CD8-positive, alpha-beta T cell (primary cell): ENCODE measurements at regions of chr10 and their contacts with region 1.

Region 1: GRCh38 chr10:103888113-103888841 is 29.7 kb downstream of the STN1 start:
- DNase-seq: peak in 3 of 9 experiments; percentile 15 to 75 (median 61)
- ATAC-seq: peak; percentile 92
- H3K4me3 ChIP-seq: no peak overlapping the region
- H3K4me3 Mint-ChIP-seq: no peak overlapping the region
- H3K27ac ChIP-seq: no peak overlapping the region
- H3K27ac Mint-ChIP-seq: peak overlapping the region; percentile 65
- H3K4me1 ChIP-seq: peaks cover 12% of the 10 kb centered on the region
- H3K4me1 Mint-ChIP-seq: peaks cover 23% of the 10 kb centered on the region
- H3K27me3 ChIP-seq: no peaks in the 10 kb centered on the region
- H3K27me3 Mint-ChIP-seq: no peaks in the 10 kb centered on the region
- CTCF ChIP-seq: peak; percentile 83

Region 2: DNA sequence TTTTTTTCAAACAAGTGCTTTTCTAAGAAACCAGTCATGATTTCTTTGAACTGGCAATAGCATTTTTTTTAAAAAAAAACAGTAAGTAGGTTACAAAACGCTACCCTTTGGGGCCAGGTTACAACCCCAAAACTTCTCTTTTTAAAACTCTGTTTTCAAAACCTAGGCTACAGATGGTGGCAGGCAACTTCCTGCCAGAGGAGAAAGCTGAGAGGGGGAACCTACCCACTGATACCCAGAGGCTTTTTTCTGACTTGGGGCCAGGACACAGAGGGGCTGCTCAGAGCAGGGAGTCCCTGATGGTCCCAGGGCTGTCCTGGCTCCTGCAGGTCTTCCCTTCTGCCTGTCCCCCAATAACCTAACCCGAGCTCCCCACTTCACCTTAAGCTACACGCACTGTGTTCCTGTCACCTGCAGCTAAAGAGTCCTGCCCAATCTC is 22.8 kb after region 1 on chr10:
- CTCF ChIA-PET with region 1: interaction called, 7 read pairs
- POLR2A ChIA-PET with region 1: interaction called, 4 read pairs
- intact Hi-C with region 1: loop called in 1 of 2 experiments (anchors 2 kb)
- DNase-seq: peak; percentile 7 to 83 (median 53)
- ATAC-seq: peak; percentile 72
- H3K4me3 ChIP-seq: peak overlapping the region; percentile 24 to 39
- H3K4me3 Mint-ChIP-seq: peak overlapping the region; percentile 80
- H3K27ac ChIP-seq: peak overlapping the region; percentile 77 to 88
- H3K27ac Mint-ChIP-seq: peak overlapping the region; percentile 91
- H3K4me1 ChIP-seq: peaks cover 88% of the 10 kb centered on the region
- H3K4me1 Mint-ChIP-seq: peaks cover 82% of the 10 kb centered on the region
- H3K27me3 ChIP-seq: no peaks in the 10 kb centered on the region
- H3K27me3 Mint-ChIP-seq: no peaks in the 10 kb centered on the region
- CTCF ChIP-seq: no peak

Region 3: DNA sequence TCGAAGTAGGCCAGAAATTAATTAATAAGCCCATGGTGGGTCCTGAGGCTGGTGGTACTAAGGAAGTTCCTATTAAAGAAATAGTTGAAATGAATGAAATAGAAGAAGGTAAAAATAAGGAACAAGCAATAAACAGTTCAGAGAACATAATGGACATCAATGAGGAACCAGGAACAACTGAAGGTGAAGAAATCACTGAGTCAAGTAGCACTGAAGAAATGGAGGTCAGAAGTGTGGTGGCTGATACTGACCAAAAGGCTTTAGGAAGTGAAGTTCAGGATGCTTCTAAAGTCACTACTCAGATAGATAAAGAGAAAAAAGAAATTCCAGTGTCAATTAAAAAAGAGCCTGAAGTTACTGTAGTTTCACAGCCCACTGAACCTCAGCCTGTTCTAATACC is 114.6 kb after region 1 on chr10:
- CTCF ChIA-PET with region 1: interaction called, 10 read pairs
- POLR2A ChIA-PET with region 1: no interaction called
- intact Hi-C with region 1: no loop called
- DNase-seq: no peak
- ATAC-seq: no peak
- H3K4me3 ChIP-seq: no peak overlapping the region
- H3K4me3 Mint-ChIP-seq: no peak overlapping the region
- H3K27ac ChIP-seq: no peak overlapping the region
- H3K27ac Mint-ChIP-seq: no peak overlapping the region
- H3K4me1 ChIP-seq: no peaks in the 10 kb centered on the region
- H3K4me1 Mint-ChIP-seq: peaks cover 6% of the 10 kb centered on the region
- H3K27me3 ChIP-seq: no peaks in the 10 kb centered on the region
- H3K27me3 Mint-ChIP-seq: no peaks in the 10 kb centered on the region
- CTCF ChIP-seq: no peak

Region 4: GRCh38 chr10:104080762-104081161 is 192.5 kb after region 1 on chr10:
- CTCF ChIA-PET with region 1: interaction called, 19 read pairs
- POLR2A ChIA-PET with region 1: no interaction called
- intact Hi-C with region 1: loop called (anchors 1 kb)
- DNase-seq: peak in 2 of 9 experiments; percentile 53 to 59
- ATAC-seq: no peak
- H3K4me3 ChIP-seq: no peak overlapping the region
- H3K4me3 Mint-ChIP-seq: no peak overlapping the region
- H3K27ac ChIP-seq: no peak overlapping the region
- H3K27ac Mint-ChIP-seq: no peak overlapping the region
- H3K4me1 ChIP-seq: no peaks in the 10 kb centered on the region
- H3K4me1 Mint-ChIP-seq: no peaks in the 10 kb centered on the region
- H3K27me3 ChIP-seq: no peaks in the 10 kb centered on the region
- H3K27me3 Mint-ChIP-seq: no peaks in the 10 kb centered on the region
- CTCF ChIP-seq: no peak

Region 5: DNA sequence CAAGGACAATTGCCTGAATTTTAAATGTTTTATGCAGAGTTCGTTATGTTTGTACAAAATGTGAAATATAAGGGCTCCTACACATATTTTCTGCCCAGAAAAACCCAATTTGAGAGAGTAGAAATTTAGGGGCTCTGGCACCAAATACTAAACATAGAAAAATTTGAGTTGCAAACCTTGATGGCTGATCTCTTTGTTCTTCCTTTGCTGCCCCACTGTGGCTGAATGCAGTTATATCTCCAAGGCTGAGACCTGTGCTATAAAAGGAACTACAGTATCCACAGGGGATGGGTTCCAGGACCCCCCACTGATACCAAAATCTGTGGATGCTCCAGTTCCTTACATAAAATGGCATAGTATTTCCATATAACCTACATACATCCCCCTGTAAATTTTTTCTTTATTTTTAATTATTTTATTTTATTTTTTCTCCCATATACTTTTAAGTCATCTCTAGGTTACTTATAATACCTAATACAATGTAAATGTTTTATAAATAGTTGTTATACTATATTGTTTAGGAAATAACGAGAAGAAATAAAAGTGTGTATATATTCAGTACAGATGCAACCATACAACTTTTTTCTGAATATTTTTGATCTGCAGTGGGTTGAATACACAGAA is 321.4 kb after region 1 on chr10:
- CTCF ChIA-PET with region 1: interaction called, 11 read pairs
- POLR2A ChIA-PET with region 1: no interaction called
- intact Hi-C with region 1: loop called (anchors 1 kb)
- DNase-seq: peak in 7 of 9 experiments; percentile 10 to 65 (median 45)
- ATAC-seq: peak; percentile 71
- H3K4me3 ChIP-seq: no peak overlapping the region
- H3K4me3 Mint-ChIP-seq: no peak overlapping the region
- H3K27ac ChIP-seq: no peak overlapping the region
- H3K27ac Mint-ChIP-seq: no peak overlapping the region
- H3K4me1 ChIP-seq: no peaks in the 10 kb centered on the region
- H3K4me1 Mint-ChIP-seq: no peaks in the 10 kb centered on the region
- H3K27me3 ChIP-seq: no peaks in the 10 kb centered on the region
- H3K27me3 Mint-ChIP-seq: peaks cover 14% of the 10 kb centered on the region
- CTCF ChIP-seq: peak; percentile 54